Adrenal gland (tissue), 19 donors: ENCODE measurements at regions of chr4 and their contacts with region 1.

Region 1: DNA sequence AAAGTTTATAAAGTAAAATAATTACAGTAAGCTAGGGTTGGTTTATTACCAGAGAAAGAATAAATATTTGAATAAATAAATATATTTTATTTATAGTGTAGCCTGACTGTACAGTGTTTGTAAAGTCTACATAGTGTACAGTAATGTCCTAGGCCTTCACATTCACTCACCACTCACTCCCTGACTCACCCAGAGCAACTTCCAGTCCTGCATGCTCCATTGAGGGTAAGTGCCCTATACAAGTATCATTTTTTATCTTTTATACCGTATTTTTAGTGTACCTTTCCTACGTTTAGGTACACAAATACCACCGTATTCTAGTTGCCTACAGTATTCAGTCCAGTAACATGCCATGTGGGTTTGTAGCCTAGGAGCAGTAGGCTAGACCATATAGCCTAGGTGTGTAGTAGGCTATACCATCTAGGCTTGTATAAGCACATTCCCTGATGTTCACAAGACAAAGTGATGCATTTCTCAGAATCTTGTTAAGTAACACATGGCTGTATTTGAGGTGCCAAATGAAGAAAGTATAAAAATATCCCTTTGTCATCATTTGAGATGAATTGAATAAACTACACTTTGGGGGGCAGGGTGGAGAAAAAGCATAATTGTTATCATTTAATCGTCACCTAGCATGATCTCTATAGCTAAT is 14.7 kb upstream of the KLHL8 start:
- DNase-seq: no peak
- H3K4me3 ChIP-seq: peak overlapping the region in 1 of 4 donors; percentile 59
- H3K27ac ChIP-seq: no peak overlapping the region
- H3K4me1 ChIP-seq: peaks cover 3 to 4% of the 10 kb centered on the region in 2 donors
- H3K27me3 ChIP-seq: no peaks in the 10 kb centered on the region
- CTCF ChIP-seq: no peak
- POLR2A ChIP-seq: no peak

Region 2: GRCh38 chr4:86908251-86908657 is 326.9 kb before region 1 on chr4:
- intact Hi-C with region 1: loop called in 1 of 2 experiments (anchors 10 kb)
- DNase-seq: no peak
- H3K4me3 ChIP-seq: no peak overlapping the region
- H3K27ac ChIP-seq: peak overlapping the region in 1 of 5 donors; percentile 73
- H3K4me1 ChIP-seq: peaks cover 0 to 6% of the 10 kb centered on the region in 2 donors
- H3K27me3 ChIP-seq: no peaks in the 10 kb centered on the region
- CTCF ChIP-seq: no peak
- POLR2A ChIP-seq: no peak

Region 3: GRCh38 chr4:86927843-86928395 is 307.2 kb before region 1 on chr4:
- intact Hi-C with region 1: loop called in 1 of 2 experiments (anchors 5 kb)
- DNase-seq: peak; percentile 40 to 88 (median 79)
- H3K4me3 ChIP-seq: no peak overlapping the region
- H3K27ac ChIP-seq: peak overlapping the region in 4 of 5 donors; percentile 25 to 77 (median 54)
- H3K4me1 ChIP-seq: peaks cover 0 to 16% of the 10 kb centered on the region in 2 donors
- H3K27me3 ChIP-seq: no peaks in the 10 kb centered on the region
- CTCF ChIP-seq: no peak
- POLR2A ChIP-seq: no peak

Region 4: GRCh38 chr4:87150498-87151261 is 84.5 kb before region 1 on chr4:
- intact Hi-C with region 1: loop called (anchors 5 kb)
- DNase-seq: peak; percentile 33 to 77 (median 67)
- H3K4me3 ChIP-seq: no peak overlapping the region
- H3K27ac ChIP-seq: no peak overlapping the region
- H3K4me1 ChIP-seq: no peaks in the 10 kb centered on the region
- H3K27me3 ChIP-seq: no peaks in the 10 kb centered on the region
- CTCF ChIP-seq: peak; percentile 86 to 95 (median 91)
- POLR2A ChIP-seq: no peak